ENCODE measurements at regions of chr21 and their contacts with region 1.

Region 1: GRCh38 chr21:36510114-36510655 is 30.3 kb upstream of the CLDN14 start:
- DNase-seq: no peak
- ATAC-seq: no peak
- H3K4me3 ChIP-seq: no peak overlapping the region
- H3K27ac ChIP-seq: no peak overlapping the region
- H3K4me1 ChIP-seq: no peaks in the 10 kb centered on the region
- H3K27me3 ChIP-seq: peaks cover 0 to 4% (median 0%) of the 10 kb centered on the region in 9 donors
- CTCF ChIP-seq: no peak
- POLR2A ChIP-seq: no peak

Region 2: DNA sequence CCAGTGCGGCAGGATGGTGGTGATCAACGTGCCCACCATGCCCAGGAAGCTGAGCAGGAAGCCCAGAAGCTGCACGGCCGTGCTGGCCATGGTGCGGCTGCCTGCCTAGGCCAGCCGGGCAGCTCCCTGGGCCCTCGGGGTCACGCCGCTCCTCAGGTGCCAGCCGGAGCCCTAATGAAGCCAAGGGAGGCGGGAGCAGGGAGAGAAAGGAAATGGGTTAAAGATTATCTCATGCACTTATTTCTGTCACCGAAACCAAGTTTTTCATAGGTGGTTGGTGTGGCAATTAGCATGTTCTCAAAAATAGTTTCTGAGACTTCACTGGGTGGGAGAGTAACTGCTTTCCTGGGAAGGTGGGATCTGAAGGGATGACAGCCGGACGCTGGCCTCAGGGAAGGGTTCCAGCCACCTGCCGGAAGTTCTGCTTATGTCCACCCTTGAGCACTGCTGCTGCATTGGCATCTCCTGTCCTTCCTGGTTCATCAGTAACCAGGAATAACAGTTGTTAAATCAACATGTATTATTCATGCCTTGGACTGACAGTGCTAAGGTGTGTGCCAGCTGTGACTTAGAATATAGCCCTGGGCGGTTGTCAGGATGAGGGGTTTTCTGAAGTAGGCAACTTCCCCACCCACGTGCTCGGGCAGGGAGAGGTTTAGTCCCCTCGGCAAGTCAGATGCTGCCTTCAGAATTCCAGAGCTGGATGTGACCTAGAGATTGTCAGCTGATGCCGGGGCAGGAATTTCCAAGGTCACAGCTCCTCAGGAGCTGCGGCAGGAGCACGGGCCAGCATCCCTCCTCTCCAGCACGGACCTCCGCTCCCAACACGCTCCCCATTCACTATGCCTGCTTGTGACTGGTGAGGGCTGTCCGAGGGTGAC is 48.3 kb before region 1 on chr21:
- intact Hi-C with region 1: loop called in 1 of 10 experiments (anchors 5 kb)
- DNase-seq: no peak
- ATAC-seq: no peak
- H3K4me3 ChIP-seq: no peak overlapping the region
- H3K27ac ChIP-seq: no peak overlapping the region
- H3K4me1 ChIP-seq: peaks cover 0 to 16% (median 0%) of the 10 kb centered on the region in 12 donors
- H3K27me3 ChIP-seq: peaks cover 0 to 9% (median 0%) of the 10 kb centered on the region in 9 donors
- CTCF ChIP-seq: no peak
- POLR2A ChIP-seq: no peak